Gastrocnemius medialis (tissue), 4 donors: ENCODE measurements at regions of chr1 and their contacts with region 1.

Region 1: DNA sequence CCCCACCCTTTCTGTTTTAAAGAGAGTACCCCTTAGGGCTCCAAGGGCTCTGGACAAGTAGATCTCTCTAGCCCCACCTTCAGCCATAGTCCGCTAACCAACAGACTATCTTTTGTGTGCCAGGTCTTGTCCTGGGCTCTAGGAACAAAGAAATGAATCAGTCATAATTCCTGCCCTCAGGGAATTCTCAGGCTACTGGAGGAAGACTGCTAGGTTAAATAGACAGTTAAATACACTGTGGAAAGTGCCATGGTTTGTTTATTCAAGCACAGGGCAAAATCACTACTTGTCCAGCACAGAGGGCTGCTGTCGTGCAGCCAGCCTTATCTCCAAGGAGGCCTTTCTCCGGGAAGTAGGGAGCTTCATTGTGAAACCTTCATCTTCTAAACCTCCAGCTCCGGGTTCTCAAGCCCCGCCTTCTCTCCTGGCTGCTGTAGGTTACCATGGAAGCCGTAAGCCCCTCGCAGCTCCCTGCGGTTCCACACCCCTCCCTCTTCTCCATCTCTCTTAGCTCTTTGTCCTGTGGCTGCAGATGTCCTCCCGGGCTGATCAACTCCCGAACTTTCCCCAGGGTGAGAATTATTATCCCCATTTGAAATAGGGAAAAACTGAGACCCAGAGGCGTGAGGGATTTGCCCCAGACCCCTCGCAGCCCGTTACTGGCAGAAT is 29.8 kb downstream of the SHISAL2A start:
- DNase-seq: no peak
- ATAC-seq: no peak
- H3K4me3 ChIP-seq: no peak overlapping the region
- H3K27ac ChIP-seq: peak overlapping the region in 2 of 4 donors; percentile 36 to 62
- H3K4me1 ChIP-seq: peaks cover 23 to 43% of the 10 kb centered on the region in 2 donors
- H3K27me3 ChIP-seq: no peaks in the 10 kb centered on the region
- CTCF ChIP-seq: no peak
- POLR2A ChIP-seq: no peak

Region 2: DNA sequence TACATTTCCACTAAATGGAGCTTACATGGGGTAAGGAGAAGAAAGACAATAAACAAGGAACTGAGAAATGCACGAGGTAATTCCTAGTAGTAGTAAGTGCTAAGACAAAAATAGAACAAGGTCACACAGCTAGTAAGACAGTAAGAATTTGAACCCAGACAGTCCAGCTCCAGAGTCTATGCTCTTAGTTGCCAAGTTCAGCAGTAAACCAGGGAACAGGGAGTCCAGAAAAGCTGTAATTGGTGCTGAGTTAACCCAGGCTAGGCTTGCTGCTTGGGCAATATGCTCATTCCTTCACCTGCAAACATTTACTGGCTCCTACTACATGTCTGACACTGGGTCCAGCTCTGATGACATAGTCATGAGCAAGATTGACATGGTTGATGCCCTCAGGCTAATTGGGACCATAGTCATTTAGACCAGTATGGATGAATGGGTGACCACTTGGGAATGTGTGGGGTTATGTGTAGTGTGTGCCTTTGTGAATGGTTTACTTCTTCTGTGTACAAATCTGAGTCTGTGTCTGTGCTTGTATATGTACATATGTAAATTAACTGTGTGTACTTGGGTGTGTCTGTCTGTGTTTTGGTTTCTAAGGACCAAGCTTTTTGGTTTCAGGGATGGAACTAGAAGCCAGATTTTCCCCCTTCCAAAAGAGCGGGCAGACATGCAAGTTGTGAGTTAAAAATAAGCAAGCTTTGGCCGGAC is 58.6 kb before region 1 on chr1:
- in situ Hi-C with region 1: no loop called
- intact Hi-C with region 1: loop called (anchors 1 kb)
- DNase-seq: peak; percentile 60 to 69
- ATAC-seq: peak; percentile 75 to 83
- H3K4me3 ChIP-seq: peak overlapping the region in 1 of 4 donors; percentile 73
- H3K27ac ChIP-seq: peak overlapping the region; percentile 85 to 96 (median 92)
- H3K4me1 ChIP-seq: peaks cover 27 to 51% of the 10 kb centered on the region in 2 donors
- H3K27me3 ChIP-seq: no peaks in the 10 kb centered on the region
- CTCF ChIP-seq: no peak
- POLR2A ChIP-seq: no peak

Region 3: DNA sequence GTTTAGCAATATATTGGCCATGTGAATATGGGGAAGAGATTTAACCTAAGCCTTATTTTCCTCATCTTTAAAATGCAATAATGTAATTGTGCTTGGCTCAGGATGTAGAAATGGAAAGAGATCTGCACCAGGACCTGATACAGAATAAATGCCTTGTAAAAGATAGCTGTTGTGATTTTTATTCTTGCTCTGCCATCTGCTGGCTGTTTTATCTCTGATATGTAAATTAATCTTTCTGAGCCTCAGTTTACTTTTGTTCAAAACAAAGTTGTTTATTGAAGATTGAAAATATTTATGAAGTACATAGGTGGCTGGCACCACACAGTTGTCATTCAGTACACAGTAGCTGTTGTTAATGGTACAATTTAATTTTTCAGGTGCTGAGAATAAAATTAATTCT is 85.3 kb after region 1 on chr1:
- in situ Hi-C with region 1: no loop called
- intact Hi-C with region 1: loop called (anchors 10 kb)
- DNase-seq: no peak
- ATAC-seq: peak in 1 of 2 donors; percentile 40
- H3K4me3 ChIP-seq: no peak overlapping the region
- H3K27ac ChIP-seq: peak overlapping the region in 3 of 4 donors; percentile 33 to 59 (median 53)
- H3K4me1 ChIP-seq: peaks cover 50 to 76% of the 10 kb centered on the region in 2 donors
- H3K27me3 ChIP-seq: no peaks in the 10 kb centered on the region
- CTCF ChIP-seq: peak; percentile 30 to 40 (median 33)
- POLR2A ChIP-seq: no peak